ENCODE measurements at regions of chr6 and their contacts with region 1.

Region 1: DNA sequence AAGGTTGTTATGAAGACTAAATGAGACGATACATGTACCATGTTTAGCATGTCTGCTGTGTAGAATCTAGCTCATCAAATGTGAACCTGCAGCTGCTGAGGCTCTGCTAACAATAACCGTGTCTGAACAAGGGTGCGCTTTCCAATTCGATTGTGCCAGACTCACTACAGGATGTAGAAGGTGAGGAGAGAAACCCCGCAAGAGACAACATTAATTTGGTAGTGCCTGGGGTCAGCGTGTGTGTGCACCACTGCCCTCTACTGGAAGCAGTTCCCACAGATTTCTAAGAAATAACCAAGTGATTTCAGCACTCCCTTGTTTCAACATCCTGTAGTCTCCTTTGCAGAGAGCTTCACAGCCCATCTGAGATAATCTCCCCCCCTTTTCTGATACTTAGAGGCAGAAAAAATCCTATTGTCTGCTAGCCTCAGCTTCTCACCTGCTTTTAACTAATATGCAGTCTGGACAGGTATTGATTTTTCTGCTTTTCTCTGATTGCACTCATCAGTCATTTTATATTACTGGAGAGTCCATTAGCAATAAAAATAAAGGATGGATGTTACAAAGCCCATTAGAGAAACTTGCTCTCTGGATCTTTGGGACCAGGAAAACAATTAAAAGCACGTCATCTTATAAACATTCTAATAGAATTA is 96.7 kb upstream of the BACH2 start:
- DNase-seq: peak; percentile 65
- H3K4me3 ChIP-seq: no peak overlapping the region
- H3K27ac ChIP-seq: no peak overlapping the region
- H3K4me1 ChIP-seq: peaks cover 5% of the 10 kb centered on the region
- H3K27me3 ChIP-seq: peaks cover 7 to 17% of the 10 kb centered on the region in 2 experiments
- CTCF ChIP-seq: peak; percentile 67 to 69
- POLR2A ChIP-seq: no peak

Region 2: GRCh38 chr6:90088009-90088408 is 305.3 kb before region 1 on chr6:
- CTCF ChIA-PET with region 1: interaction called, 3 read pairs
- POLR2A ChIA-PET with region 1: no interaction called
- dilution Hi-C with region 1: no loop called
- intact Hi-C with region 1: loop called (anchors 5 kb)
- DNase-seq: peak; percentile 62
- H3K4me3 ChIP-seq: no peak overlapping the region
- H3K27ac ChIP-seq: no peak overlapping the region
- H3K4me1 ChIP-seq: peaks cover 12% of the 10 kb centered on the region
- H3K27me3 ChIP-seq: peaks cover under 1 to 2% of the 10 kb centered on the region in 2 experiments
- CTCF ChIP-seq: no peak
- POLR2A ChIP-seq: no peak

Region 3: GRCh38 chr6:90184334-90185298 is 208.7 kb before region 1 on chr6:
- CTCF ChIA-PET with region 1: interaction called, 7 read pairs
- POLR2A ChIA-PET with region 1: no interaction called
- dilution Hi-C with region 1: no loop called
- intact Hi-C with region 1: loop called (anchors 5 kb)
- DNase-seq: peak; percentile 92
- H3K4me3 ChIP-seq: no peak overlapping the region
- H3K27ac ChIP-seq: no peak overlapping the region
- H3K4me1 ChIP-seq: peaks cover 10% of the 10 kb centered on the region
- H3K27me3 ChIP-seq: no peaks in the 10 kb centered on the region
- CTCF ChIP-seq: no peak
- POLR2A ChIP-seq: no peak

Region 4: DNA sequence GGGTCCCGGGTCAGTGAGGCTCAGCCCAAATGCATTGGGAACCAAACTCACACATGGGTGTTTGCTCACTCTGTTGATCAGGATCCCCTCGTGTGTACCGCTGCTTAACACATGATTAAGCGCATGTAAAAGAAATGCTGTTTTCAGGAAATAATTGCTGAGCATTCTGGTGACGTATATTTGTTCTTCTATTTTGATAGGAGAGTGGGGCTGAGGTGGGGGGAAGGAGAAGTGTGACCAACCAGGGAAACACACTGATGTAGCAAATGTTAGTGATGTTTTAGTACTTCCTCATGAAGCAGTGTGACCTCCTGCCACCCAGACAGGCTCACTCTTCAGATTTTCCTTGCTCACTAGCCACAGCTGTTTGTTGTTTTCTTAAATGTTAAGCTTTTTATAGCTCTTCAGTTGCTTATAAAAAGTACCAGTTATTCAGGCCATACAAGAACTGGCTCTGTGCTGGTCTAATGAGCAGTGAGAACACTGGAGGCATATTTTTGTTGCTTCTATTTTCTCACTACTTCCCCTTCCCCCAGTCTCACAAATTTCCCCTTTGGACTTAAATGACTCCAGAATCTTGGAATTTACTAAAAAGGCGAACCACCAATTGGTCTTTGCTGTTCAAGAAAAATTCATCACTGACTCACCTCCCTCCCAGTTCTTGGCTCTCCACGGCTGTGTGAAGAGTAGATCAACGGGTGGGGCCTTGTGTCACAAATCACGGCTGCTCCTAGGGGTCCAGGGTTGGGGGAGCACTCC is 17.5 kb before region 1 on chr6:
- CTCF ChIA-PET with region 1: interaction called, 19 read pairs
- POLR2A ChIA-PET with region 1: no interaction called
- dilution Hi-C with region 1: no loop called
- intact Hi-C with region 1: no loop called
- DNase-seq: no peak
- H3K4me3 ChIP-seq: no peak overlapping the region
- H3K27ac ChIP-seq: no peak overlapping the region
- H3K4me1 ChIP-seq: no peaks in the 10 kb centered on the region
- H3K27me3 ChIP-seq: no peaks in the 10 kb centered on the region
- CTCF ChIP-seq: no peak
- POLR2A ChIP-seq: no peak

Region 5: DNA sequence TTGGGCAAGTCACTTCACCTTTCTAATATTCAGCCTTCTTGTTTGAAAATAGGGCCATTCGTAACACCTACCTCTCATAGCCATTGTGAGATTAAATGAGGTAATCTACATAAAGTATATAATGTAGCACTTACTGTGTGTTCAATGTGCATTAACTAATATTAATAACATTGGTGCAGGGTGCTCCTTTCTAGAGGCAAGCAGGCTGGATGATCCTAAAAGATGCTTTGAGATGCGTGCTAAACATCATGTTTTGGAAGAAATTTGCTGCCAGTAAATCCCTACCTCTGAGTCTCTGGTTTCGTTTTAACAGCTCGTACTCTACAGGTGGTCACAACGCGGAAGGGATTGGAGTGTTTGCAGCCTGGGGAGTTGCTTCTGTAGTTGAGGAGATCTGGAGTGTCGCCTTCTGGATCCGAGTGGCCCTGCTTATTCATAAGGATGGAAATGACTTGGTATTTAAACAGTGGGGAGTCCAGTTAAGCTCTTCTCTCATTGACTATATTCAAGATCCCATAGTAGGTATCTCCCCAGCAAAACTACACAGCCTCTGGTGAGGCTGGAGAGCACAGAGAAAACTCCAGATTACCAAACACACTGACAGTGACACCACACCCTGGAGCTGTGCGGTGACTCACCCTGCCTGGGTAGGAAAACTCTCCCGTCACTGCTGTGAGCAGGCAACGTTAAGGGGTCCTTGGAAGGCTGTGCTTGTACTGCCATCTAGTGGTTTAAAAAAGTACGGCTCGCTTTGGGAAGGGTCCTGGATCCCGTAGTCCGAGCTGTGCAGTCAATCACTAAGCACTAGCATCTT is 85.6 kb after region 1 on chr6:
- CTCF ChIA-PET with region 1: interaction called, 18 read pairs
- POLR2A ChIA-PET with region 1: no interaction called
- dilution Hi-C with region 1: no loop called
- intact Hi-C with region 1: loop called (anchors 1 kb)
- DNase-seq: peak; percentile 89
- H3K4me3 ChIP-seq: no peak overlapping the region
- H3K27ac ChIP-seq: no peak overlapping the region
- H3K4me1 ChIP-seq: peaks cover 9% of the 10 kb centered on the region
- H3K27me3 ChIP-seq: peaks cover 0 to 3% of the 10 kb centered on the region in 2 experiments
- CTCF ChIP-seq: peak; percentile 75 to 81
- POLR2A ChIP-seq: no peak